ENCODE measurements at regions of chr1 and their contacts with region 1.

Region 1: GRCh38 chr1:184386312-184387068 is at the start of gene C1orf21:
- DNase-seq: peak; percentile 92
- H3K4me3 ChIP-seq: peak within 1 kb of the TSS; percentile 67 to 93 (median 84)
- H3K27ac ChIP-seq: peak within 1 kb of the TSS; percentile 86 to 94 (median 90)
- H3K4me1 ChIP-seq: peaks cover 3 to 30% (median 11%) of the 10 kb centered on the region in 4 donors
- H3K27me3 ChIP-seq: no peaks in the 10 kb centered on the region
- CTCF ChIP-seq: no peak
- EP300 ChIP-seq: no peak
- POLR2A ChIP-seq: peak; percentile 87
- total RNA-seq, gene C1orf21: 38.4 to 70.0 (median 62.4) TPM

Region 2: DNA sequence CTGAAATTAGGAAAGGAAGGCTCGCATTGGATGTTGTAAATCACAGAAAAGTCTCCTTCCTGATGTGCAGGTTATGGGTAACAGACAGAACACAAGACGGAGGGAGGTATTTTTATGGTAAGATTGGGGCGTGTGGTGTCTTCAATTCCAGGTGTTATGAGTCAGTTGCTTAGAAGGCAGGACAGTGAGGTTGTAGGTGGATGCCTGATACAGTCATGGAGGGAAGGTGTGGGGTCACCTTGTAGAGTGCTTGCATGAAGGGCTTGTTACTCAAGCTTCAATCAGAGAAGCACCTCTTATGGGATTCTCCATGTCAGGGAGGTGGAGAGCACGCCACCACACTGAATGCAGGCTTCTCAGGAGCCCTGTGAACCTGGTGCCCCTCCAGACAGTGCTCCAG is 63.4 kb after region 1 on chr1:
- in situ Hi-C with region 1: no loop called
- intact Hi-C with region 1: loop called (anchors 2 kb)
- DNase-seq: no peak
- H3K4me3 ChIP-seq: no peak overlapping the region
- H3K27ac ChIP-seq: no peak overlapping the region
- H3K4me1 ChIP-seq: peaks cover 5 to 35% (median 15%) of the 10 kb centered on the region in 4 donors
- H3K27me3 ChIP-seq: no peaks in the 10 kb centered on the region
- CTCF ChIP-seq: no peak
- EP300 ChIP-seq: no peak
- POLR2A ChIP-seq: no peak

Region 3: GRCh38 chr1:184472136-184472535 is 85.6 kb after region 1 on chr1:
- in situ Hi-C with region 1: no loop called
- intact Hi-C with region 1: no loop called
- DNase-seq: no peak
- H3K4me3 ChIP-seq: no peak overlapping the region
- H3K27ac ChIP-seq: no peak overlapping the region
- H3K4me1 ChIP-seq: peaks cover 0 to 6% (median 0%) of the 10 kb centered on the region in 4 donors
- H3K27me3 ChIP-seq: no peaks in the 10 kb centered on the region
- CTCF ChIP-seq: no peak
- EP300 ChIP-seq: no peak
- POLR2A ChIP-seq: no peak

Region 4: DNA sequence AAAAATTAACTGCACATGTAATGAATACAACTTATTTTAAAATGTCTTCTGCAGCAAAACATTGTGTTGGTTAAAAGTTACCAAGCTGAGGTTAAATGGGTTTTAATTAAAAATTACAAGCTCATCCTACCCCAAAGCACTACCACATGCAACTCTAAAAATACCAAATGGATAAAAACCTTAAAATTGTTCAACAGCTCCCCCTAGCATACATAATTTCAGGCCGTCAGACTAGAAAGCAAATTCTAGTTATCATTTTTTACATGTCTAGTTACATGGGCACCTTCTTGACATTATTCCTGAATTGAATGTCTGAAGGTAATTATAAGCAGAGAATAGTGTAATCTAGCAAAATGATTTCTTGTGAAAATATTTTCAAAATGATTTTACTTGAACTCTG is 176.8 kb after region 1 on chr1:
- in situ Hi-C with region 1: loop called in 1 of 4 experiments (anchors 25 kb)
- intact Hi-C with region 1: loop called (anchors 10 kb)
- DNase-seq: no peak
- H3K4me3 ChIP-seq: no peak overlapping the region
- H3K27ac ChIP-seq: peak overlapping the region in 1 of 4 donors; percentile 48
- H3K4me1 ChIP-seq: peaks cover 10 to 33% (median 22%) of the 10 kb centered on the region in 4 donors
- H3K27me3 ChIP-seq: no peaks in the 10 kb centered on the region
- CTCF ChIP-seq: peak; percentile 29 to 44 (median 40)
- EP300 ChIP-seq: no peak
- POLR2A ChIP-seq: no peak

Region 5: GRCh38 chr1:184664042-184664655 is 277.7 kb after region 1 on chr1:
- in situ Hi-C with region 1: loop called in 2 of 4 experiments (anchors 25 kb)
- intact Hi-C with region 1: loop called (anchors 5 kb)
- DNase-seq: peak; percentile 79
- H3K4me3 ChIP-seq: peak overlapping the region in 3 of 4 donors; percentile 24 to 46 (median 26)
- H3K27ac ChIP-seq: peak overlapping the region in 1 of 4 donors; percentile 20
- H3K4me1 ChIP-seq: peaks cover 7 to 21% (median 11%) of the 10 kb centered on the region in 4 donors
- H3K27me3 ChIP-seq: no peaks in the 10 kb centered on the region
- CTCF ChIP-seq: peak; percentile 88 to 97 (median 93)
- EP300 ChIP-seq: no peak
- POLR2A ChIP-seq: no peak